ENCODE measurements at regions of chr9 and their contacts with region 1.

Region 1: GRCh38 chr9:88056876-88057275 is 81.4 kb downstream of the SPATA31C2 start:
- DNase-seq: no peak
- H3K4me3 ChIP-seq: no peak overlapping the region
- H3K27ac ChIP-seq: no peak overlapping the region
- H3K4me1 ChIP-seq: no peaks in the 10 kb centered on the region
- H3K27me3 ChIP-seq: no peaks in the 10 kb centered on the region
- CTCF ChIP-seq: no peak
- EP300 ChIP-seq: no peak
- POLR2A ChIP-seq: no peak

Region 2: DNA sequence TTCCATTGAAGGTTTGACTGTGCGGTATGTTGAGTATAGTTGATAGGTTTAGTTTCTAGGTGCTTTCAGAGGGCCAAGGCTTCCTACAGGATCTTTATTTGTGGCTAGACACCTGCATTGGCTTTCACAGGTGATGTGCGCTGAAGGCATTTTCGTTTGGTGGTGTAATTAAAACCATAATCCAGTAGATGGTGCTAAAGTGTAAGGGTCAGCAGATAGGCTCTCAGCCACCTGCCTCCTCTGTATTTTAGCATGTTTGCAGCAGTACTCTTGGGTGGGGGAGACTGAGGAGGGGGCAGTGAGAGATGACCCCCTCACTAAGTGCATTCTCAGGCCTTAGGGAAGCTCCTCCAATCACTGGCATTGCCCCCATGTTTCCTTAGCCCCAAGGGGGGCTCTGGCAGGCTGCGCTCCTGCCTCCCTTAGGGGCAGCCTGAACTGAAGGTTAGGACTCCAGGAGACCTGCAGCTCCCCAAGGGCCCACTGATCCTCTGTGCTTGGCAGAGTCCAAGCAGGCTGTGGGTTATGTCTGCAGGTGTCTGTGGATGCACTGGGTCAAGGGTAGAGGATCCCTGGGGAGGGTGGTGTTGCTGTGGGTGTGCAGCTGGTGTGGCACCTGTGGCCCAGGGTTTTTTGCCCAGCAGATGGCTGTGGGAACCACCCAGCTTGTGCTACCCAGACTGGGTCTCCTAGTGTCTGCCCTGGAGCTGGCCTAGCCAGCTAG is 105.9 kb before region 1 on chr9:
- in situ Hi-C with region 1: loop called in 1 of 4 experiments (anchors 25 kb)
- intact Hi-C with region 1: no loop called
- DNase-seq: no peak
- H3K4me3 ChIP-seq: no peak overlapping the region
- H3K27ac ChIP-seq: no peak overlapping the region
- H3K4me1 ChIP-seq: no peaks in the 10 kb centered on the region
- H3K27me3 ChIP-seq: no peaks in the 10 kb centered on the region
- CTCF ChIP-seq: peak; percentile 42 to 63 (median 52)
- EP300 ChIP-seq: no peak
- POLR2A ChIP-seq: no peak

Region 3: GRCh38 chr9:88106491-88106890 is 49.6 kb after region 1 on chr9:
- in situ Hi-C with region 1: no loop called
- intact Hi-C with region 1: no loop called
- DNase-seq: peak; percentile 57
- H3K4me3 ChIP-seq: no peak overlapping the region
- H3K27ac ChIP-seq: no peak overlapping the region
- H3K4me1 ChIP-seq: no peaks in the 10 kb centered on the region
- H3K27me3 ChIP-seq: peaks cover 12% of the 10 kb centered on the region
- CTCF ChIP-seq: peak; percentile 49 to 75 (median 66)
- EP300 ChIP-seq: no peak
- POLR2A ChIP-seq: no peak